IMR-90 (cell line): ENCODE measurements at regions of chr5 and their contacts with region 1.

Region 1: DNA sequence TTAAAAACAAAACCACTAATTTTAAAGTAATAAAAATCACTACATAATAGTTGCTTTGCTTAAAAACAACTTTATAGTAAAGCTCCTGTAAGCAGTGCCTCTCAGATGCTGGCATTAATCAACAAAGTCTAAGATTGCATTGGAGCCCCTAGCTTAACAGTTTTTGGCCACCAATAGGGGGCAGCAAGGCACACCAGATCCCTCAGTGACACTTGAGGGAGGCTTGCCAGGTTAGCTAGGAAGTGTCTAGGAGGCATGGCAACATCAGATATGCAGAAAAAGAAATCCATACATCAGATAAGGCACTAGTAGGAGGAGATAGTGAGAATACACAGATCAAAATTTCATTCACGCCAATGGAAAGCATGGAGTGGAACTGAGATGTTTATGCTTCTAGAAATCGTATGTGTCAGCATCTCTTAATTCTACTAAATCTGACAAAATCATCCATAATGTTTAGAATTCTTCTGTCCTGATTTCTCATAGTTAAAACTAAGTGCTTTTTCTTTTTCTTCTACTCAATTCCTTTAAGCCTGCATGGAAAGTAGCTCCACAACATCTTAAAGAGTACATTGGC is 73.6 kb upstream of the PAM start:
- DNase-seq: peak; percentile 73
- ATAC-seq: peak; percentile 92
- H3K4me3 ChIP-seq: no peak overlapping the region
- H3K27ac ChIP-seq: no peak overlapping the region
- H3K4me1 ChIP-seq: no peaks in the 10 kb centered on the region
- H3K27me3 ChIP-seq: no peaks in the 10 kb centered on the region
- CTCF ChIP-seq: peak; percentile 83
- POLR2A ChIP-seq: no peak
- RAD21 ChIP-seq: peak; percentile 86

Region 2: GRCh38 chr5:102582696-102583095 is 98.8 kb before region 1 on chr5:
- CTCF ChIA-PET with region 1: no interaction called
- POLR2A ChIA-PET with region 1: no interaction called
- dilution Hi-C with region 1: no loop called
- in situ Hi-C with region 1: no loop called
- intact Hi-C with region 1: no loop called
- DNase-seq: no peak
- ATAC-seq: no peak
- H3K4me3 ChIP-seq: no peak overlapping the region
- H3K27ac ChIP-seq: no peak overlapping the region
- H3K4me1 ChIP-seq: no peaks in the 10 kb centered on the region
- H3K27me3 ChIP-seq: no peaks in the 10 kb centered on the region; the same call in 1 of the 2 replicates
- CTCF ChIP-seq: no peak
- POLR2A ChIP-seq: no peak
- RAD21 ChIP-seq: no peak

Region 3: GRCh38 chr5:102778478-102778877 is 97.0 kb after region 1 on chr5:
- CTCF ChIA-PET with region 1: interaction called, 4 read pairs
- POLR2A ChIA-PET with region 1: no interaction called
- dilution Hi-C with region 1: no loop called
- in situ Hi-C with region 1: no loop called
- intact Hi-C with region 1: loop called (anchors 5 kb)
- DNase-seq: peak; percentile 74
- ATAC-seq: peak; percentile 74
- H3K4me3 ChIP-seq: no peak overlapping the region
- H3K27ac ChIP-seq: no peak overlapping the region
- H3K4me1 ChIP-seq: no peaks in the 10 kb centered on the region; the same call in 1 of the 2 replicates
- H3K27me3 ChIP-seq: no peaks in the 10 kb centered on the region
- CTCF ChIP-seq: no peak
- POLR2A ChIP-seq: no peak
- RAD21 ChIP-seq: no peak

Region 4: DNA sequence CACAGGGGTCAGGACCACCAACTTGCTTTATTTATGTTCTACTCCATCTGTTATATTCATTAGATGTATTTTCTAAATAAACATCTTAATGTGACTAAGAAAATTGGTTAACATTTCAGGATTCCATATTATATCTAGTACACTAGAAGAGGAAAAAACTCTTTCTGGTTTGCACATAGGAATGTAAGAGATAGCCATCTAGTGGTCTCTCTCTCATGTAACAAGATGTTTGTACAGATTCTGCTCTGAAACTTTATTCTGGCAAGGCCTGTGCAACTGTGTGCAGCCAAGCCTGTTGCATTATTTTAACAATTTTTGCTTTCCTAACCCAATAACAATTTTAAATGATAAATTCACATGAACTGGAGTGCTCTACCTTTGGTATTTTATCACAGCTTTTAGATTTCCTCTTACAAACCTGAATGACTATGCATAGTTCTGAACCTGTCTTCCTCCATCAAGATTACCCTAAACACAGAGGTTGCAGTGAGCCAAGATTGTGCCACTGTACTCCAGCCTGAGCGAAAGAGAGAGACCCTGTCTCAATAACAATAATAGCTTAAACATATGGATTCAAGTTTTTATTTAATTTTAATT is 290.3 kb after region 1 on chr5:
- CTCF ChIA-PET with region 1: interaction called, 8 read pairs
- POLR2A ChIA-PET with region 1: no interaction called
- dilution Hi-C with region 1: no loop called
- in situ Hi-C with region 1: no loop called
- intact Hi-C with region 1: loop called (anchors 2 kb)
- DNase-seq: peak; percentile 70
- ATAC-seq: peak; percentile 86
- H3K4me3 ChIP-seq: no peak overlapping the region
- H3K27ac ChIP-seq: no peak overlapping the region
- H3K4me1 ChIP-seq: peaks cover 6% of the 10 kb centered on the region
- H3K27me3 ChIP-seq: no peaks in the 10 kb centered on the region
- CTCF ChIP-seq: peak; percentile 62
- POLR2A ChIP-seq: no peak
- RAD21 ChIP-seq: peak; percentile 60

Region 5: GRCh38 chr5:103041071-103041676 is 359.7 kb after region 1 on chr5:
- CTCF ChIA-PET with region 1: interaction called, 3 read pairs
- POLR2A ChIA-PET with region 1: no interaction called
- dilution Hi-C with region 1: no loop called
- in situ Hi-C with region 1: loop called (anchors 10 kb)
- intact Hi-C with region 1: loop called (anchors 2 kb)
- DNase-seq: peak; percentile 65
- ATAC-seq: peak; percentile 54; the same call in 1 of the 2 replicates
- H3K4me3 ChIP-seq: no peak overlapping the region
- H3K27ac ChIP-seq: no peak overlapping the region
- H3K4me1 ChIP-seq: no peaks in the 10 kb centered on the region
- H3K27me3 ChIP-seq: no peaks in the 10 kb centered on the region
- CTCF ChIP-seq: peak; percentile 71
- POLR2A ChIP-seq: no peak
- RAD21 ChIP-seq: peak; percentile 83

Region 6: DNA sequence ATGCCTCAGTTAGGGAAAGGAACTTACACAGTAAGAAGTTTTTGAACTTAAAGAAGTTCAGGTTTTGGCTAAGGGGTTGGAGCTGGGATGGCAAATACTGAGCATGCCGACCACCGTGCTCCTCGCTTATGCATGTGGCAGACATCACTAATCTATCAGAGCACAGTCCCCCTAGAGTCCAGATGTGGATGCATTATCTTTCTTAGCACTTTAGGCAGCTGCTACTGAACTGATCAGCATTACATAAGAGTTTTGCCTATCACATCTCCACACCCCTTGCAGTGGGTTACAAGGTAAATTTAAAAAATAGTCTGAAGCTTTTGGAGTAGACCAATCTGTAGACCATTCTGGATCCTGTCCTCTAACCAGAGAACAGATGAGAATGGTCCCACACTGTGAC is 599.5 kb after region 1 on chr5:
- CTCF ChIA-PET with region 1: no interaction called
- POLR2A ChIA-PET with region 1: no interaction called
- dilution Hi-C with region 1: no loop called
- in situ Hi-C with region 1: no loop called
- intact Hi-C with region 1: no loop called
- DNase-seq: no peak
- ATAC-seq: no peak
- H3K4me3 ChIP-seq: no peak overlapping the region
- H3K27ac ChIP-seq: no peak overlapping the region
- H3K4me1 ChIP-seq: no peaks in the 10 kb centered on the region
- H3K27me3 ChIP-seq: no peaks in the 10 kb centered on the region
- CTCF ChIP-seq: no peak
- POLR2A ChIP-seq: no peak
- RAD21 ChIP-seq: no peak